ENCODE measurements at regions of chr9 and their contacts with region 1.

Region 1: DNA sequence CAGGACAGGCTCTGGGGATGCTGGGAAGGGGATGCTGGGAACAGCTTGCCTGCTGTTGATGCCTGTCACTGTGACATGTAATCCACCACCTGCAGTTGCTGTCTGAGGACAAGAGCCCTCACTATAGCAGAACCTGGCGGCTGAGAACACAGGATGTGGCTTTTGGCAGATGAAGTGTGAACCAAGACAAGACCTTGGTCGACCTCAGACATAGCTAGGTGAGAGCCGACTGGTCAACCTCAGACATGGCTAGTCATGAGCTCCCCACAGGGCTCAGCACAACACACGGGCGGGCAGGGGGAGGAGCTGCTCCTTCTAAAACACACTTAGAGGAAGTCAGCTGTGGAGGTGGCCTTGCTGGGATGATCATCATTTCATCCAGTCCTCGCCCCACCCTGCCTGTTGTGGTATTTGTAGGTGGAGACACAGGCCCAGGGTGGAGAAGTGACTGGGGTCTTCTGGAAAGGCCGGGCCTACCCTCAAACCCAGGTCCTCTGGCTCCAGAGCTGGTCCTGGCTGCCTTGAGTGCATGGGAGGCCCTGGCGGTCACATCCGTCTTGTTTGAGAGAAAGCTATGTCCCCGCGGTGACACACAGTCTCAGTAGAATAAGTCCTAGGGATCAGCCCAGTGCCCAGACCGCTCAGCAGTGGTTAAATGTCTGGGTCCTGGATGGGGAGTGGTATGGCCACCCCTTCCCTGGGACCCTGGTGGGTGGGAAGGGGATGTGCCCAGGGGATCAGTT is 6.1 kb downstream of the SUSD3 start:
- DNase-seq: peak; percentile 53
- ATAC-seq: peak; percentile 85
- H3K4me3 Mint-ChIP-seq: peak overlapping the region; percentile 73
- H3K27ac Mint-ChIP-seq: peak overlapping the region; percentile 95
- H3K4me1 Mint-ChIP-seq: peaks cover 77% of the 10 kb centered on the region
- H3K27me3 Mint-ChIP-seq: no peaks in the 10 kb centered on the region
- CTCF ChIP-seq: no peak

Region 2: DNA sequence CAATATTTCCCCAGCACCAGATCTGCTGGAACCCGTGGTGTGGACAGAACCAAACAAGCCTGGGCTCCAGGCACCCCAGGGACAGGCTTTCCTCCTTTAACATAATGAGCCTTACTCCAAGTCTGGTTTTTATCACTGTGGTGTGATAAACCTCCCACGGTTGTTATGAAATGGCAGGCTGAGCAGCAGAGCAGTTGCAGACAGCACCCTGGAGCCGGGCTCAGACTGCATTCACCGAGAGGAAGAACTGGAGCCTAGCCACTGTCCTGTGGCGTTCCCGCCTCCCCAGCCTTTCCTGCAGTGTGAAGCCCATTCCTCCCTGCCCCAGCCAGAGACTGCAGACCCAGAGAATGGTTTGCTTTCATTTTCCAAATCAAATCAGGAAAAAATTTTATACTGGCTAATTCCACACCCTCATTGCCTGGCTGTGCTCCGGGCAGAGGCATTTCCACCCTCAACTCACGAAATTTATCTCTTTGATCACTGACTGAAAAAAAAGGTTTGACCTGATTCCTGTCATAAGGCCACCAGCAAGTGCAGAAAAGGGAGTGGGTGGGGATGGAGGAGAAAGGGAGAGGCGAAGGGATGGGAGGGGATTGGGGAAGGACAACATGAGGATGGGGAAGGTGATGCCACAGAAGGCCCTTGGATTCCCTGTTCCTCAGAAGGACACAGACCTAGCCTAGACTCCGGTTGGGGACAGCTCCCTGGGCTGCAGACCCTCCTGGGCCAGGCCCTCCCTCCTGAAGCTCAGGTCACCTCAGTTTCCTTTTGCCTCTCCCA is 413.5 kb before region 1 on chr9:
- CTCF ChIA-PET with region 1: no interaction called
- POLR2A ChIA-PET with region 1: no interaction called
- intact Hi-C with region 1: no loop called
- DNase-seq: no peak
- ATAC-seq: no peak
- H3K4me3 Mint-ChIP-seq: no peak overlapping the region
- H3K27ac Mint-ChIP-seq: no peak overlapping the region
- H3K4me1 Mint-ChIP-seq: peaks cover 7% of the 10 kb centered on the region
- H3K27me3 Mint-ChIP-seq: no peaks in the 10 kb centered on the region
- CTCF ChIP-seq: no peak

Region 3: GRCh38 chr9:93079371-93079770 is 14.8 kb after region 1 on chr9:
- CTCF ChIA-PET with region 1: no interaction called
- POLR2A ChIA-PET with region 1: interaction called, 3 read pairs
- intact Hi-C with region 1: loop called (anchors 1 kb)
- DNase-seq: peak; percentile 5
- ATAC-seq: no peak
- H3K4me3 Mint-ChIP-seq: no peak overlapping the region
- H3K27ac Mint-ChIP-seq: no peak overlapping the region
- H3K4me1 Mint-ChIP-seq: no peaks in the 10 kb centered on the region
- H3K27me3 Mint-ChIP-seq: no peaks in the 10 kb centered on the region
- CTCF ChIP-seq: no peak

Region 4: GRCh38 chr9:93095205-93096130 is 30.9 kb after region 1 on chr9:
- CTCF ChIA-PET with region 1: no interaction called
- POLR2A ChIA-PET with region 1: interaction called, 53 read pairs
- intact Hi-C with region 1: loop called (anchors 1 kb)
- DNase-seq: peak; percentile 100
- ATAC-seq: peak; percentile 79
- H3K4me3 Mint-ChIP-seq: peak overlapping the region; percentile 86
- H3K27ac Mint-ChIP-seq: peak overlapping the region; percentile 99
- H3K4me1 Mint-ChIP-seq: peaks cover 83% of the 10 kb centered on the region
- H3K27me3 Mint-ChIP-seq: no peaks in the 10 kb centered on the region
- CTCF ChIP-seq: no peak

Measured in activated B cell treated with CpG ODN at 0.5 μM for 24 hours (primary cell).